GM10248 (cell line): ENCODE measurements at regions of chr6 and their contacts with region 1.

Region 1: GRCh38 chr6:87692086-87692485 is 9.9 kb downstream of the AKIRIN2 start:
- DNase-seq: no peak
- CTCF ChIP-seq: no peak

Region 2: DNA sequence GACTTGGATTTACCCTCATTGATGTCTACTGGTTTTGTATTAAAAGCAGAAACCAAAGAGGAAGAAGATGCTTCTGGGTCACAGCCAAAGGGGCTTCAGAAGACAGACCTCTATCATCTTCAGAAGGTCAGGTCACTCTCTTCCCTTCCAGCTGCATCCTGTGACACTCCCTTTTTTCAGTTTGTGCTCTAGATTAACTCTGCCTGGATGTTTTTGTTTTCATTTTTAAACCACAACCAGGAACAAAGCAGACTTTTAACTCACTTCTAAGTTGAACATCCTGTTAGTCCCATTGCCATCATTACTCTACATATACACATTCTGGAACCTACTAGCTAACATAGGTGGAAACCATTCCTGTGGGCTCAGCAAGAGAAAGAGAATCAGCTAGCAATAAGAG is 35.2 kb before region 1 on chr6:
- CTCF ChIA-PET with region 1: no interaction called
- POLR2A ChIA-PET with region 1: interaction called, 10 read pairs
- DNase-seq: no peak
- CTCF ChIP-seq: no peak

Region 3: GRCh38 chr6:87756858-87757257 is 64.8 kb after region 1 on chr6:
- CTCF ChIA-PET with region 1: no interaction called
- POLR2A ChIA-PET with region 1: interaction called, 12 read pairs
- DNase-seq: peak; percentile 75
- CTCF ChIP-seq: no peak